ACHN (cell line): ENCODE measurements at regions of chr2 and their contacts with region 1.

Region 1: DNA sequence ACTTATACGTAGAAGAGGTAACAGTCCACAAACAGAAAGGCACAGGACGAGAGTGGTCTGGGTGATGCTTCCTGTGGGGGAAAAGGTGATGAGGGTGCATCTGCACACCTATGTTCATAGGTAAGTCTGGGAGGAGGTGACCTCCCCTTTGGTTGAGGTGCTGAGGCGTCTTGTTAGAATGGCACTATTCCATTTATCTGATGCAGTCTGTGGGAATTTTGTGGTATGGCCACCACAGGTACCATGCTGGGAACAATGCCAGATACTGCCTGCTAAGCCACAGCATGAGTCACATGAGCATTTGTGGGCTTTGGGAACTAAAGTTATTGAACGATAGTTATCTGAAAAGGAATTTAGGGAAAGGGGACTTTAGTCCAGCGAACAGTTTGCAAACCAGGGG is 27.9 kb downstream of the IL37 start:
- DNase-seq: peak; percentile 63

Region 2: GRCh38 chr2:112749755-112750559 is 188.9 kb before region 1 on chr2:
- in situ Hi-C with region 1: loop called (anchors 10 kb)
- DNase-seq: peak; percentile 77